ENCODE measurements at regions of chrX and their contacts with region 1.

Region 1: DNA sequence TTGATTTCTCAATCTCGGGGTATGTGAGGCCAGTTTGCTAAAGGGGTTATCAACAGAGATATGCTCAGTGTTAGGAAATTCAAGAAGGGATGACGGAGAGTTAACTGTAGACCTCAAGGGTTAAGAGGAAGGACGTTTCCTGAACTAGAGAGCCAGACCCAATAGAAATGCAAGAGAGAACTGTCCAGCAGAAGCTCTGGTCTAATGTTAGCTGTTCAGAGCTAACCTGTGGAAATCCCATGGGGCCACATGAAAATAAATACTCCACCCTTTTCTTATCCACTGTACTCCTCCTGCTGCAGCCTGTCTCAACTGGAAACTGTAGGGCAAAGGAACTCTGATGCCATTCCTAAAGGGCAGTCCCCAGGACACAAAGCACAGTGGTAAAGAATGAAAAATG is 274.3 kb downstream of the DMD start:
- DNase-seq: no peak
- ATAC-seq: peak in 1 of 2 donors; percentile 44
- H3K4me3 ChIP-seq: no peak overlapping the region
- H3K27ac ChIP-seq: no peak overlapping the region
- H3K4me1 ChIP-seq: no peaks in the 10 kb centered on the region
- H3K27me3 ChIP-seq: no peaks in the 10 kb centered on the region
- CTCF ChIP-seq: no peak
- POLR2A ChIP-seq: no peak

Region 2: DNA sequence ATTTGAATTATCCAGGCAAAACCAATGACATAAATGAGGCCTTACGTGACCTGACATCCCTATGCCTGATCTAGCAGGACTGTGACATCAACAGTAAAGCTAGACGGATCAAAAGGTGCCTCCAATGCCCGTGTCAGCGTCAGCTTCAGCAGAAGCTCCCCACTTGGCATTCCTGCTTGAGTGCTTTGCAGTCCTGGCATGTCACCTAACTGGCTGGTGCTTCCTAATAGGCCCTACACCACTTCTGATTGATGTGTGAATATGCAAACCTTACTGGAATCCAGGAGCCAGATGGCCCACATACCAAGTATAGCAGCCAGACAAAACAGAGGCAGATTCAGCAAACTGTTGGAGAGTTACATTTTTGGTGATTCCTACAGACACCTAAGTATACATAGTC is 50.1 kb after region 1 on chrX:
- in situ Hi-C with region 1: no loop called
- intact Hi-C with region 1: no loop called
- DNase-seq: no peak
- ATAC-seq: peak in 1 of 2 donors; percentile 33
- H3K4me3 ChIP-seq: no peak overlapping the region
- H3K27ac ChIP-seq: no peak overlapping the region
- H3K4me1 ChIP-seq: no peaks in the 10 kb centered on the region
- H3K27me3 ChIP-seq: no peaks in the 10 kb centered on the region
- CTCF ChIP-seq: no peak
- POLR2A ChIP-seq: no peak

Region 3: DNA sequence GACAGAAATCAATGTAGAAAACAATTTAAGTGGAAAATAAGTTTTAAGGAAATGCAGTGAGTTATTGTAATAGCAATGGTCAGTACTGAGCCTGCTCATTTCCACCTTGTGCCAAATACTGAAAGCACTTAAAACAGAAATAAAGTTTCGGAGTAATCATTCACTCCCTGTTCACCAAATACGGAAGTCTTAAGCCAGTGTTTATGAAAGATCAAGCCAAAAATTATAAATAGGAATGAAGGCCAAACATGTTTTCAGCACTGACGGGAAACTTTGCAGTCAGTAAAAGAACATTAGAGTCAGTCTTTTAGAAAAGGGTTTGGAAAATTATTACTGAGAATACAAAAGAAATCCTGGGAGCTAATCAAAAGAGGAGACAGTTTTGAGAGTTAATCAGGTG is 95.7 kb after region 1 on chrX:
- in situ Hi-C with region 1: loop called in 1 of 4 experiments (anchors 25 kb)
- intact Hi-C with region 1: no loop called
- DNase-seq: no peak
- ATAC-seq: no peak
- H3K4me3 ChIP-seq: no peak overlapping the region
- H3K27ac ChIP-seq: peak overlapping the region in 3 of 4 donors; percentile 56 to 64 (median 59)
- H3K4me1 ChIP-seq: peaks cover 0 to 5% of the 10 kb centered on the region in 2 donors
- H3K27me3 ChIP-seq: no peaks in the 10 kb centered on the region
- CTCF ChIP-seq: no peak
- POLR2A ChIP-seq: no peak

Measured in gastrocnemius medialis (tissue), 4 donors.